ENCODE measurements at regions of chr15 and their contacts with region 1.

Region 1: DNA sequence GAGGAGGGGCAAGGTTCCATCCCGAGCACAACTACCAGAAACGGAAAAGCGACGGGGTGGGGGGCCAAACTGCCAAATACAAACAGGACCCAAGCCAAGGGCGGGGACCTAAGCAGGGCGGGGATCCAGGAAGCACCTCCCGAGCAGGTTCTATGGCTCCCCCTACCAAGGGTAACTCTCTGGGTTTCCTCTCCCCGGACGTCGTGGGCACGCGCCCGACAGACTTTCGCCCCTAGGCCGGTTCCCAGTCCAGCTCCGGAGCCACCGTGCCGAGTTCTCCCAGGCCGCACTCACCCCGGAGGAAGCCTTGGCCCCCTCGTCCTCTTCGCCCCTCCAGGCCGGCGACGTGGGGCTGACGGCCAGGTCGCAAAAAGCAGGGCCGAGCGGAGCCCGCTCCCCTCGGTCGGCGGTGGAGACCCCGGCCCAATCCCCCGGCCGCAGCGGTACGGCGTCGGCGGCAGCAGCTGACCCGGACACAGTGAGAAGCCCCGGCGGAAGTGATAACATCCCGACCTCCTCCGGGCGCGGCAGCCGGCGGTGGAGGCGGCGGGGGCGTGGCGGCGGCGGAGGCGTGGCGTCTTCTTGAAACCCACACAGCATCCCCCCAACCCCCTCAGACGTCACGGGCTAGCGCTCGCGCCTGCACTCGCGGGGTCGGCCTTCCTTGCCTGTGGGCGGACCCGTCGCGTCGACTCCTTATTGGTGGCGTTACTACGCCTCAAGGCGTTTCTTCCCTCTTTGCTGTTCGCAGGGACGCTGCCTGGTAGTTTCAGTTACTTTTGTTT is at the start of gene BNIP2:
- DNase-seq: peak; percentile 99 to 100 (median 100)
- ATAC-seq: peak; percentile 88
- H3K4me3 ChIP-seq: peak within 1 kb of the TSS; percentile 81 to 98
- H3K4me3 Mint-ChIP-seq: peak within 1 kb of the TSS; percentile 93
- H3K27ac ChIP-seq: peak within 1 kb of the TSS; percentile 98 to 100
- H3K27ac Mint-ChIP-seq: peak within 1 kb of the TSS; percentile 96
- H3K4me1 ChIP-seq: peaks cover 33% of the 10 kb centered on the region
- H3K4me1 Mint-ChIP-seq: peaks cover 46% of the 10 kb centered on the region
- H3K27me3 ChIP-seq: no peaks in the 10 kb centered on the region
- H3K27me3 Mint-ChIP-seq: no peaks in the 10 kb centered on the region
- CTCF ChIP-seq: no peak
- total RNA-seq, gene BNIP2: 107 to 114 TPM

Region 2: GRCh38 chr15:58770857-58771620 is 918.0 kb before region 1 on chr15 and contains the start of gene MINDY2:
- CTCF ChIA-PET with region 1: no interaction called
- POLR2A ChIA-PET with region 1: no interaction called
- intact Hi-C with region 1: loop called in 1 of 2 experiments (anchors 10 kb)
- DNase-seq: peak; percentile 83 to 97 (median 94)
- ATAC-seq: peak; percentile 94
- H3K4me3 ChIP-seq: peak within 1 kb of the TSS; percentile 98
- H3K4me3 Mint-ChIP-seq: peak within 1 kb of the TSS; percentile 92
- H3K27ac ChIP-seq: peak within 1 kb of the TSS; percentile 86 to 89
- H3K27ac Mint-ChIP-seq: peak within 1 kb of the TSS; percentile 94
- H3K4me1 ChIP-seq: peaks cover 34% of the 10 kb centered on the region
- H3K4me1 Mint-ChIP-seq: peaks cover 22% of the 10 kb centered on the region
- H3K27me3 ChIP-seq: no peaks in the 10 kb centered on the region
- H3K27me3 Mint-ChIP-seq: no peaks in the 10 kb centered on the region
- CTCF ChIP-seq: no peak
- total RNA-seq, gene MINDY2: 4.7 to 4.9 TPM

Region 3: DNA sequence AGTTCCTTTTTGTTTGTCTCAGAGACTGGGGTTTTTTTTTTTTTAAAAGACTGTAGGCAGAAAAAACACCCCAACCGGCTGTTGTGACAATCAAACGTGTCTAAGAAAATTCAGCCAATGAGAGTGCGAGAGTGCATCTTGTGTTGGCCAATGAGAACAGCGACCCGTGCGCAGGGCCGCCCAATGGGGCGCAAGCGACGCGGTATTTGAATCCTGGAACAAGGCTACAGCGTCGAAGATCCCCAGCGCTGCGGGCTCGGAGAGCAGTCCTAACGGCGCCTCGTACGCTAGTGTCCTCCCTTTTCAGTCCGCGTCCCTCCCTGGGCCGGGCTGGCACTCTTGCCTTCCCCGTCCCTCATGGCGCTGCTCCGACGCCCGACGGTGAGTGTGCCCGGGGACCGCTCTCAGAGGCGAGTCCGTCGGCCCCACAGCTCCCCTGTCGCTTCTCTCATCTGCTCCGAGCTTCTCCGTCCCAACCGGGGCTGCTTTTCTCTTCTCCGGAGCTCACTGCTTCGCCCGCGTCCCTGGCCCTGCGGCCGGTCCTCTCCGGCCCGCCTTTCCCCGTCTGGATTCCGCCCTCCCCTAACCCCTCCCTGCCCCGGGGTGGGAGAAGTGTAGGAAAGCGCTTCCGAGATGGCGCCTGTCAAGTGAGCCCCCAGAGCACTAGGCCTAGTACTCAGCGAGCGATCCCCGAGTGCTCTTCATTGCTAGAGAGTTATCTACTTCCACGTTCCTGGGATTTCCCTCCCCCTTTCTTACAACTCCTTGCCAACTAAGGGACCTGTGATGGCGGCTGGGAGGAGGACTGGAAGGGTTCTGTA is 583.9 kb before region 1 on chr15 and contains the start of gene CCNB2:
- CTCF ChIA-PET with region 1: no interaction called
- POLR2A ChIA-PET with region 1: no interaction called
- intact Hi-C with region 1: loop called in 1 of 2 experiments (anchors 5 kb)
- DNase-seq: peak; percentile 70 to 95 (median 80)
- ATAC-seq: peak; percentile 99
- H3K4me3 ChIP-seq: peak within 1 kb of the TSS; percentile 76 to 78
- H3K4me3 Mint-ChIP-seq: peak within 1 kb of the TSS; percentile 95
- H3K27ac ChIP-seq: peak within 1 kb of the TSS; percentile 60 to 71
- H3K27ac Mint-ChIP-seq: peak within 1 kb of the TSS; percentile 99
- H3K4me1 ChIP-seq: peaks cover 7% of the 10 kb centered on the region
- H3K4me1 Mint-ChIP-seq: peaks cover 17% of the 10 kb centered on the region
- H3K27me3 ChIP-seq: no peaks in the 10 kb centered on the region
- H3K27me3 Mint-ChIP-seq: no peaks in the 10 kb centered on the region
- CTCF ChIP-seq: no peak
- total RNA-seq, gene CCNB2: 0.33 to 0.64 TPM

Region 4: GRCh38 chr15:59553879-59554735 is 134.9 kb before region 1 on chr15:
- CTCF ChIA-PET with region 1: no interaction called
- POLR2A ChIA-PET with region 1: no interaction called
- intact Hi-C with region 1: no loop called
- DNase-seq: no peak
- ATAC-seq: no peak
- H3K4me3 ChIP-seq: no peak overlapping the region
- H3K4me3 Mint-ChIP-seq: no peak overlapping the region
- H3K27ac ChIP-seq: no peak overlapping the region
- H3K27ac Mint-ChIP-seq: no peak overlapping the region
- H3K4me1 ChIP-seq: no peaks in the 10 kb centered on the region
- H3K4me1 Mint-ChIP-seq: peaks cover 2% of the 10 kb centered on the region
- H3K27me3 ChIP-seq: no peaks in the 10 kb centered on the region
- H3K27me3 Mint-ChIP-seq: peaks cover 6% of the 10 kb centered on the region
- CTCF ChIP-seq: no peak

Region 5: GRCh38 chr15:59668556-59668955 is 20.5 kb before region 1 on chr15:
- CTCF ChIA-PET with region 1: no interaction called
- POLR2A ChIA-PET with region 1: no interaction called
- intact Hi-C with region 1: no loop called
- DNase-seq: no peak
- ATAC-seq: no peak
- H3K4me3 ChIP-seq: no peak overlapping the region
- H3K4me3 Mint-ChIP-seq: no peak overlapping the region
- H3K27ac ChIP-seq: no peak overlapping the region
- H3K27ac Mint-ChIP-seq: no peak overlapping the region
- H3K4me1 ChIP-seq: no peaks in the 10 kb centered on the region
- H3K4me1 Mint-ChIP-seq: peaks cover 3% of the 10 kb centered on the region
- H3K27me3 ChIP-seq: no peaks in the 10 kb centered on the region
- H3K27me3 Mint-ChIP-seq: no peaks in the 10 kb centered on the region
- CTCF ChIP-seq: no peak

Region 6: GRCh38 chr15:59797756-59798604 is 108.9 kb after region 1 on chr15:
- CTCF ChIA-PET with region 1: no interaction called
- POLR2A ChIA-PET with region 1: no interaction called
- intact Hi-C with region 1: loop called (anchors 1 to 2 kb)
- DNase-seq: no peak
- ATAC-seq: no peak
- H3K4me3 ChIP-seq: peak overlapping the region in 1 of 2 experiments; percentile 11
- H3K4me3 Mint-ChIP-seq: peak overlapping the region; percentile 49
- H3K27ac ChIP-seq: peak overlapping the region; percentile 21 to 37
- H3K27ac Mint-ChIP-seq: peak overlapping the region; percentile 85
- H3K4me1 ChIP-seq: peaks cover 66% of the 10 kb centered on the region
- H3K4me1 Mint-ChIP-seq: peaks cover 76% of the 10 kb centered on the region
- H3K27me3 ChIP-seq: no peaks in the 10 kb centered on the region
- H3K27me3 Mint-ChIP-seq: no peaks in the 10 kb centered on the region
- CTCF ChIP-seq: no peak

Region 7: DNA sequence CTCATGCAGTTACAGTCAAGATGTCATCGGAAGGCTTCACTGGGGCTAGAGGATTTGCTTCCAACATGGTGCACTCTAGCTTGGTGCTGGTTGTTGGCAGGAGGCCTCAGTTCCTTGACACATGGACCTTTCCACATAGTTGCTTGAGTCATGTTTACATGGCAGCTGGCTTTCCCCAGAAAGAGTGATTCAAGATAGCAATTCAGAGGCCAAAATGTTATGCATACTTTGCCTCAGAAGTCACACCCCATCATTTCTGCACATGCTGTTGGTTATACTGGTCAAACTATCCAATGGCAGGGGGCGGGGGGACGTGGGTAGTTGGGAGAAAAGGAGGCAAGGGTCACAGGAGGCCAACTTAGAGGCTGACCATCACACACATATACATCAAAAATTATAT is 373.8 kb after region 1 on chr15:
- CTCF ChIA-PET with region 1: no interaction called
- POLR2A ChIA-PET with region 1: no interaction called
- intact Hi-C with region 1: no loop called
- DNase-seq: no peak
- ATAC-seq: no peak
- H3K4me3 ChIP-seq: no peak overlapping the region
- H3K4me3 Mint-ChIP-seq: no peak overlapping the region
- H3K27ac ChIP-seq: no peak overlapping the region
- H3K27ac Mint-ChIP-seq: no peak overlapping the region
- H3K4me1 ChIP-seq: no peaks in the 10 kb centered on the region
- H3K4me1 Mint-ChIP-seq: no peaks in the 10 kb centered on the region
- H3K27me3 ChIP-seq: no peaks in the 10 kb centered on the region
- H3K27me3 Mint-ChIP-seq: peaks cover 16% of the 10 kb centered on the region
- CTCF ChIP-seq: no peak

Region 8: GRCh38 chr15:60179786-60180391 is 490.9 kb after region 1 on chr15:
- CTCF ChIA-PET with region 1: interaction called, 3 read pairs
- POLR2A ChIA-PET with region 1: interaction called, 3 read pairs
- intact Hi-C with region 1: loop called (anchors 1 to 5 kb)
- DNase-seq: peak in 5 of 9 experiments; percentile 3 to 70 (median 34)
- ATAC-seq: peak; percentile 63
- H3K4me3 ChIP-seq: no peak overlapping the region
- H3K4me3 Mint-ChIP-seq: no peak overlapping the region
- H3K27ac ChIP-seq: no peak overlapping the region
- H3K27ac Mint-ChIP-seq: no peak overlapping the region
- H3K4me1 ChIP-seq: no peaks in the 10 kb centered on the region
- H3K4me1 Mint-ChIP-seq: no peaks in the 10 kb centered on the region
- H3K27me3 ChIP-seq: no peaks in the 10 kb centered on the region
- H3K27me3 Mint-ChIP-seq: peaks cover 9% of the 10 kb centered on the region
- CTCF ChIP-seq: peak; percentile 94

Region 9: GRCh38 chr15:60478566-60479360 is 789.7 kb after region 1 on chr15 and contains the start of gene ICE2:
- CTCF ChIA-PET with region 1: no interaction called
- POLR2A ChIA-PET with region 1: no interaction called
- intact Hi-C with region 1: loop called (anchors 1 kb)
- DNase-seq: peak; percentile 88 to 98 (median 96)
- ATAC-seq: peak; percentile 90
- H3K4me3 ChIP-seq: peak within 1 kb of the TSS; percentile 68 to 89
- H3K4me3 Mint-ChIP-seq: peak within 1 kb of the TSS; percentile 98
- H3K27ac ChIP-seq: peak within 1 kb of the TSS; percentile 85 to 92
- H3K27ac Mint-ChIP-seq: peak within 1 kb of the TSS; percentile 100
- H3K4me1 ChIP-seq: peaks cover 39% of the 10 kb centered on the region
- H3K4me1 Mint-ChIP-seq: peaks cover 72% of the 10 kb centered on the region
- H3K27me3 ChIP-seq: no peaks in the 10 kb centered on the region
- H3K27me3 Mint-ChIP-seq: no peaks in the 10 kb centered on the region
- CTCF ChIP-seq: no peak
- total RNA-seq, gene ICE2: 13.9 to 18.3 TPM